Mammary epithelial cell (primary cell): ENCODE measurements at regions of chr14 and their contacts with region 1.

Region 1: DNA sequence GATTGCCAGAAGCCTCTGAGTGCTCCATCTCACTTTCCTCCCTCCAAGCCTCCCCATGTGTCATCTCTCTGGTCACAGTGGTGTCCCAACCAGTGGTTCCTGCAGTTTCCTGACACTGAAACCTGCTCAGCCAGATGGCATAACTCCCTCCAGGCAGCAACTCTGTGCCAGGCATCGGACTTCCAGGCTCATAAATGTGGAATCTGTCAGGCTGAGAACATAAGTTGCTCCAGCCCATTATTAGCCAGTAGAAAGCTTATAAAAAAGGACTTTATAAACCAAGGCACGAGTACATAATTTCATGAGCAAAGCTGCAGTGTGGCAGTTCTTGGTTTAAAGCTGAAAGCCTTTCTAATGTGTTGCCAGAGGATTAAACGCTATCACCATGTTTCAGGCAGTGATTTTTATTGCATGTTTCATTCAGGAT is 194.3 kb downstream of the DACT1 start:
- DNase-seq: peak; percentile 8
- H3K4me3 ChIP-seq: no peak overlapping the region
- H3K27ac ChIP-seq: no peak overlapping the region
- H3K4me1 ChIP-seq: peaks cover 6% of the 10 kb centered on the region
- H3K27me3 ChIP-seq: no peaks in the 10 kb centered on the region
- CTCF ChIP-seq: no peak

Region 2: GRCh38 chr14:58872061-58872460 is 40.0 kb after region 1 on chr14:
- CTCF ChIA-PET with region 1: no interaction called
- dilution Hi-C with region 1: loop called (anchors 5 kb)
- in situ Hi-C with region 1: no loop called
- intact Hi-C with region 1: no loop called
- DNase-seq: no peak
- H3K4me3 ChIP-seq: no peak overlapping the region
- H3K27ac ChIP-seq: no peak overlapping the region
- H3K4me1 ChIP-seq: no peaks in the 10 kb centered on the region
- H3K27me3 ChIP-seq: peaks cover 2% of the 10 kb centered on the region
- CTCF ChIP-seq: no peak